B cell (primary cell): ENCODE measurements at regions of chr5 and their contacts with region 1.

Region 1: GRCh38 chr5:180291943-180292831 is at the start of gene MAPK9:
- DNase-seq: peak; percentile 90
- ATAC-seq: peak; percentile 79
- H3K4me3 ChIP-seq: peak within 1 kb of the TSS; percentile 21 to 90 (median 81)
- H3K4me3 Mint-ChIP-seq: peak within 1 kb of the TSS; percentile 92
- H3K27ac ChIP-seq: peak within 1 kb of the TSS; percentile 72 to 95
- H3K27ac Mint-ChIP-seq: peak within 1 kb of the TSS; percentile 94
- H3K4me1 ChIP-seq: peaks cover 32 to 38% of the 10 kb centered on the region in 2 donors
- H3K4me1 Mint-ChIP-seq: peaks cover 49% of the 10 kb centered on the region
- H3K27me3 ChIP-seq: no peaks in the 10 kb centered on the region
- H3K27me3 Mint-ChIP-seq: no peaks in the 10 kb centered on the region
- CTCF ChIP-seq: no peak
- total RNA-seq, gene MAPK9: 39.7 and 40.4 TPM in 2 replicates

Region 2: GRCh38 chr5:180315762-180316212 is 23.6 kb after region 1 on chr5:
- CTCF ChIA-PET with region 1: interaction called, 109 read pairs
- POLR2A ChIA-PET with region 1: interaction called, 10 read pairs
- intact Hi-C with region 1: loop called (anchors 1 kb)
- DNase-seq: peak; percentile 74
- ATAC-seq: peak; percentile 92
- H3K4me3 ChIP-seq: no peak overlapping the region
- H3K4me3 Mint-ChIP-seq: no peak overlapping the region
- H3K27ac ChIP-seq: no peak overlapping the region
- H3K27ac Mint-ChIP-seq: peak overlapping the region; percentile 21
- H3K4me1 ChIP-seq: no peaks in the 10 kb centered on the region
- H3K4me1 Mint-ChIP-seq: no peaks in the 10 kb centered on the region
- H3K27me3 ChIP-seq: peaks cover 0 to 2% (median 0%) of the 10 kb centered on the region in 4 experiments
- H3K27me3 Mint-ChIP-seq: peaks cover 4% of the 10 kb centered on the region
- CTCF ChIP-seq: peak; percentile 99

Region 3: DNA sequence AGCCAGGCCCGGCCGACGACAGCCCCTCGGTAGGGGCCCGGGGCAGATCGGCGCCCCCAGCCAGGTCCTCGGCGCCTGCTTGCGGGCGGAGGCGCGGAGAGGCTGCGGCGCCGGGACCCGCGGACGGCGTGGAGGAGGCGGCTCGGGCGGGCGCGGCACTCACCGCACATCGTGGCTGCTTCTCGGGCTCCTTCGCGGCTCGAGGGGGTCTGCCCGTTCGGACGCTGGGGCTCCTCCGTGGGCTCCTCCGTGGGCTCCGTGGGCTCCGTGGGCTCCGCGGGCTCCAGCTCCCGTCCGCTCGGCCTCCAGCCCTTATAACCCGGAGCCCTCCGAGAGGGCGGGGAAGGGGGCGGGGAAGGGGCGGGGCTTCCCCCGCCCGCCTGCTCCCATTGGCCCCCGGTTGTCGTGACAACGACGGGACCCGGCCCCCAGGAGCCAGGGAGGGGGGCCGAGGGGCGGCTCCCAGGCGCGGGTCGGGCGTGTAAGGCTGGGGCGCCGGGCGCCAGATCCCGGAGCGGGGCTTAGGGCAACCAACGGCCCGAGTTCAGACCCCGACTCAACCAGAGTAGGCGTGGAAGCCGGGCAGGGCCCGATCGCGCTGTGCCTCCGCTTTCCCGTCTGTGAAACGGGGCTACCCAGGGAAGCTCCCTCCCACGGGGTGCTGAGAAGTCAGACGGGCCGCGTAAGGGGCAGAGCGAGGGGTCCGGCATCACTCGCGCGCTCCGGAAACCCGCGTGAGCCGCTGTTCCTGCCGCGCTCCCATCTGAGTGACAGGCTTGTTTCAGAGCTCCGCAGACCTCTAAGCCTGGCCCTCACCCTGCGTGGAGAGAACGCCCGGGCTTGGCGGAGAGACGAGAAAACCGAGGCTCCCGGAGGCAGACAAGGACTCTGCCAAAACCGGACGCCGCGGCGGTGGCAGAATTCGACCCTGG is 61.1 kb after region 1 on chr5 and contains the start of gene GFPT2:
- CTCF ChIA-PET with region 1: interaction called, 6 read pairs
- POLR2A ChIA-PET with region 1: no interaction called
- intact Hi-C with region 1: loop called (anchors 1 kb)
- DNase-seq: peak; percentile 83
- ATAC-seq: peak; percentile 93
- H3K4me3 ChIP-seq: peak within 1 kb of the TSS; percentile 41 to 79 (median 65)
- H3K4me3 Mint-ChIP-seq: peak within 1 kb of the TSS; percentile 74
- H3K27ac ChIP-seq: no peak within 1 kb of the TSS
- H3K27ac Mint-ChIP-seq: no peak within 1 kb of the TSS
- H3K4me1 ChIP-seq: peaks cover 21 to 23% of the 10 kb centered on the region in 2 donors
- H3K4me1 Mint-ChIP-seq: peaks cover 9% of the 10 kb centered on the region
- H3K27me3 ChIP-seq: peaks cover 0 to 57% (median 27%) of the 10 kb centered on the region in 4 experiments
- H3K27me3 Mint-ChIP-seq: peaks cover 47% of the 10 kb centered on the region
- CTCF ChIP-seq: no peak
- total RNA-seq, gene GFPT2: 1.6 and 2.8 TPM in 2 replicates

Region 4: GRCh38 chr5:180494060-180494509 is 201.9 kb after region 1 on chr5 and contains the start of gene CNOT6:
- CTCF ChIA-PET with region 1: interaction called, 11 read pairs
- POLR2A ChIA-PET with region 1: no interaction called
- intact Hi-C with region 1: no loop called
- DNase-seq: peak; percentile 97
- ATAC-seq: peak; percentile 92
- H3K4me3 ChIP-seq: peak within 1 kb of the TSS; percentile 63 to 84 (median 81)
- H3K4me3 Mint-ChIP-seq: peak within 1 kb of the TSS; percentile 92
- H3K27ac ChIP-seq: peak within 1 kb of the TSS; percentile 72 to 85
- H3K27ac Mint-ChIP-seq: peak within 1 kb of the TSS; percentile 99
- H3K4me1 ChIP-seq: peaks cover 18 to 19% of the 10 kb centered on the region in 2 donors
- H3K4me1 Mint-ChIP-seq: peaks cover 30% of the 10 kb centered on the region
- H3K27me3 ChIP-seq: no peaks in the 10 kb centered on the region
- H3K27me3 Mint-ChIP-seq: no peaks in the 10 kb centered on the region
- CTCF ChIP-seq: no peak
- total RNA-seq, gene CNOT6: 31.1 and 31.4 TPM in 2 replicates